HEK293 (cell line): ENCODE measurements at regions of chr1 and their contacts with region 1.

Region 1: DNA sequence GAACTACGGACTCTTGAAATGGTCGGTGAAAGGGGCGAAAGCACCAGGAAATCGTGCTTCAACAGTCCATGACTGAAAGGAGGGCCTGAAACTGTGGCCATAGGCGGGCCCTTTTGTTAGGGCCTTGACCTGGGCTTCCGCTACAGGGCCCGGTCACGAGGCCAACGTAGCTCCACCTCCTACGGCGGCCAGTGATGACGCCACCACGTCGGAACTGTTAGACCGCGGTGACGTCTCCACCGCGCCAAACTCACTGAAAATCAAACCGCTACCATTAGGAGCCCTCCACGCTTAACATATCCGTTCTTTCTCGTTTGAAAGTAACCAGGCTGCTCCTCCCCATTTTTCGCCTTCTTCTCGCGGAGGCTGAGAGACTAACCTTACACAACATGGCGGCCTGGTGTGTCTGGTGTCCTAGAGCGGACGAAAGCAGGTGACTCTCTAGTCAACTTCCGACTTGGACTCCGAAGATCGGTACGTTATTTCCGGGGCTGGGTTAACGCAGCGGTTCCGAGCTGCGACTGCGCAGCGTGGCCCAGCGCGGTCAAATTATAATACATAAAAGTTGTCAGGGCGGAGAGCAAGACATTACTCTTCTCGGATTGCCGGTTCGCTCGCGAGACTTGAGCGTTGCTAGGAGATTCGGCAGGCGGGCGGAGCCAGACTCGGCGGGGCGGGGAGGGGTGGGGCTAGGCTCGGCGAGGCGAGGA is 376 bp upstream of the CACYBP start:
- H3K4me3 ChIP-seq: peak overlapping the region; percentile 88
- H3K27ac ChIP-seq: peak overlapping the region; percentile 92
- H3K4me1 ChIP-seq: no peaks in the 10 kb centered on the region
- CTCF ChIP-seq: no peak

Region 2: GRCh38 chr1:174769961-174770549 is 229.3 kb before region 1 on chr1:
- CTCF ChIA-PET with region 1: interaction called, 13 read pairs
- POLR2A ChIA-PET with region 1: no interaction called
- H3K4me3 ChIP-seq: no peak overlapping the region
- H3K27ac ChIP-seq: no peak overlapping the region
- H3K4me1 ChIP-seq: no peaks in the 10 kb centered on the region
- CTCF ChIP-seq: peak; percentile 60

Region 3: DNA sequence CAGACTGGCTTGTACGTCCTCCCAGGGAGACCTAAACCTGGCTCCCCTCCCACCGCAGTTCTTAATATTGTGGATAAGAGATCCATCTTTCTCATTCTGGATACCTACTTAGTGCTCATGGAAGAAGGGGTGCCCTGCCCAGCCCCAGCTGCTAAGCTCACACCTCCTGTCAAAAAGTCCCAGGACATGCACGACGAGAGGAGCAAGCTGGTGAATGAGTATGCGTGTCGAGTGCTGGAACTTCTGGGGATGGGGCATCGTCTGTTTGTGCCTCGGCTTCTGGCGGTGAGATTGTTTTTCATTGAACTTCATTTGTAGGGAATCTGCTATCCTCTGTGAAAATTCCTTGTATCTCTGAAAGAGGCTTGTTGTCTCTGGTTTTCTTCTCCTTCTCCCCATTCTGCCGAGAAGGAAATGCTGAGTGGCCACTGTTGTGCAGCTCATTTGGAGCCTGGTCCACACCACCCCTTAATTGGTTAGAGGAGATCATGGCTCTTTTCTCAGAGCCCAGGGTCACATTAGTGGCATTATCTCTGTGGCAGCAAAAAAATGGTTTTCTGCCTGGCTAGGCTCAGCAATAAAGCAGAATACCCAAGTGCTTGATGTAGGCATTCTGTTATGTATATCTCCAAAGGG is 199.0 kb before region 1 on chr1:
- CTCF ChIA-PET with region 1: interaction called, 3 read pairs
- POLR2A ChIA-PET with region 1: interaction called, 21 read pairs
- H3K4me3 ChIP-seq: peak overlapping the region; percentile 38
- H3K27ac ChIP-seq: peak overlapping the region; percentile 32; the same call in 1 of the 2 replicates
- H3K4me1 ChIP-seq: peaks cover 8% of the 10 kb centered on the region; the same call in 1 of the 2 replicates
- CTCF ChIP-seq: no peak

Region 4: GRCh38 chr1:175033953-175034352 is 34.6 kb after region 1 on chr1:
- CTCF ChIA-PET with region 1: no interaction called
- POLR2A ChIA-PET with region 1: interaction called, 18 read pairs
- H3K4me3 ChIP-seq: no peak overlapping the region
- H3K27ac ChIP-seq: no peak overlapping the region
- H3K4me1 ChIP-seq: no peaks in the 10 kb centered on the region
- CTCF ChIP-seq: no peak